Activated CD4-positive, alpha-beta memory T cell treated with anti-CD3 and anti-CD28 coated beads, Interleukin-2, amount 10 ng/mL, durations not matched to agents 7 days and 5 days (primary cell): ENCODE measurements at regions of chr7 and their contacts with region 1.

Region 1: GRCh38 chr7:17298207-17298839 is at the start of gene AHR:
- DNase-seq: peak; percentile 92
- H3K4me3 Mint-ChIP-seq: peak within 1 kb of the TSS; percentile 94
- H3K27ac Mint-ChIP-seq: peak within 1 kb of the TSS; percentile 93
- H3K4me1 Mint-ChIP-seq: peaks cover 25% of the 10 kb centered on the region
- H3K27me3 Mint-ChIP-seq: no peaks in the 10 kb centered on the region
- total RNA-seq, gene AHR: 37.7 to 38.0 TPM

Region 2: DNA sequence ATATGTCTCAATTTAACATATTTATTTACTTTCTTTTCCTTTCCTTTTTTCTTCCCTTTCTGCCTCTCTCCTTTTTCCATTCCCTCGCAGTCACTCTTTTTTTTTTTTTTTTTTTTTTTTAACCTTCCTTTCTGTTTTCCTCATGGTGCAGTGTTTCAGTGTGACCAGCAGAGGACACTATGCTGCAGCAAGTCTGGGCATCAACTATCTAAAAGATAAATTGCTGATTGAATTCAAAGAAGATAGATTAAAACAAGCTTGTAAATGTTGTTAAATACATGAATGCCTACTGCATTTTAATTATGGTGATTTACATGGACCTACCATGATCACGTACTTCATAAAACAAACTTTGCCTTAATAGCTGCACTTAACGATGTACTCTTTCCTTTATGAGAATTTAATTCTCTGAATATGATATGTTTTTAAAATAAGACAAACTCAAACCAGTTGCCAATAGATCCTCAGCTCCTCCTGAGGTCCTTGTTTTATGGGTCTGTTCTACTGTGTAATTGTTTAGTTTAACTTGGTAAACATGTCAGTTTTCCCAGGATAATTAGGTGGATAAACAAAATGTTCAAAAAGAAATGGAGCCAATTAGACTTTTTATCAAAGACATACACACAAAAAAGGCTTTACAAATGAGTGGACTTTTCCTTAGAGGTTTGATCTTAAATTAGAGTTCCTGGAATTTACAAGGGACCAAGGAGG is 315.5 kb before region 1 on chr7:
- CTCF ChIA-PET with region 1: interaction called, 35 read pairs
- POLR2A ChIA-PET with region 1: interaction called, 9 read pairs
- DNase-seq: peak; percentile 42
- H3K4me3 Mint-ChIP-seq: no peak overlapping the region
- H3K27ac Mint-ChIP-seq: no peak overlapping the region
- H3K4me1 Mint-ChIP-seq: peaks cover 7% of the 10 kb centered on the region
- H3K27me3 Mint-ChIP-seq: peaks cover 13% of the 10 kb centered on the region

Region 3: DNA sequence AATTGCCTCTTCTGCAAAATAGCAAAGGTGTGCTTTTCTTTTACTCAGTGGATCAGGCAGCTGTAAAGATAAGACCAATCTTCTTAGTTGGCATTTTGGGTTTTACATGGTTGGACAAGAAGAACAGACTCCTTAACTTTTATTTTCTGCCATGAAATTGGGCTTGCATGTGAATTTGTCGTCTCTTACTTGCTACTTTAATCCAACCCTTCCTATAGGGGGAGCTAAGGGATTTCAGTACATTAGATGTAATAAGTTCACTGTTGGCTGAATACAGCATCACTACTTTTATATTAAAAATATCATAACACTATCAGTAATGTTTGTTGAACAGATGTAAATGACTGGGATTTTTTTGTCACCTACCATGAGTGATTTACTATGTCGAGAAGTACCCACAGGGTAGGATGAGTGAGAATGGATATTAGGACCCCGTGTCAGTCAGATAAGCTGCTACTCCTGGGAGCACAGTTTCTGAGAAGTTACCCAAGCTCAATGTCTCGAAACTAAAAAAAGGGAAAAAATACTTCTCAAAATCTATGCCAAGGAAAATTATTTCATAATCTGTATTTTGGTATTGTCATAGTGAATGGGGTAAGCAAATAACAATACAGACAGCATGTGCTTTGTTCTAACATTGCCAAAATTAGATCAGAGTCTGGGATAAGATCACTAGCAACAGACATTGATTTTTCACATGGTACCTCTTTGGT is 289.2 kb before region 1 on chr7:
- CTCF ChIA-PET with region 1: interaction called, 10 read pairs
- POLR2A ChIA-PET with region 1: interaction called, 8 read pairs
- DNase-seq: no peak
- H3K4me3 Mint-ChIP-seq: no peak overlapping the region
- H3K27ac Mint-ChIP-seq: no peak overlapping the region
- H3K4me1 Mint-ChIP-seq: peaks cover 33% of the 10 kb centered on the region
- H3K27me3 Mint-ChIP-seq: peaks cover 1% of the 10 kb centered on the region

Region 4: GRCh38 chr7:17139081-17139480 is 159.2 kb before region 1 on chr7:
- CTCF ChIA-PET with region 1: interaction called, 6 read pairs
- POLR2A ChIA-PET with region 1: interaction called, 29 read pairs
- DNase-seq: no peak
- H3K4me3 Mint-ChIP-seq: peak overlapping the region; percentile 40
- H3K27ac Mint-ChIP-seq: peak overlapping the region; percentile 93
- H3K4me1 Mint-ChIP-seq: peaks cover 75% of the 10 kb centered on the region
- H3K27me3 Mint-ChIP-seq: no peaks in the 10 kb centered on the region

Region 5: DNA sequence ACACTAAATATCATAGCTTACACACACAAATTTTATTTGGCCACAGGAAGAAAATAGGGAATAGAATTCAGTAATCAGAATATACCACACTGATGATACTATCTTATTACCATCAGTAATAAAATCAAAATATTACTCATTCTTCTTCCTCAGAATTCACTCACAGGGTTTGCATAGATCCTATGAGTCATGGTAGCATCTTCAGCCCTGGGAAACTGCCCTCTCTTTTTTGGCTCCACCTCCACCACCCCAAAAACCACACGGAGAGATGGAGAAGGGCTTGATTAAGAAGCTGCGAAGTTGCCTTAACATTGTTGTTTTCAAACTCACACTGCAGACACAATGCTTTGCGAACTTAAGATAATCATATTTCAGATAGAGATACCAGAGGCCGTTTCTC is 154.0 kb before region 1 on chr7:
- CTCF ChIA-PET with region 1: interaction called, 6 read pairs
- POLR2A ChIA-PET with region 1: interaction called, 29 read pairs
- DNase-seq: peak; percentile 78
- H3K4me3 Mint-ChIP-seq: peak overlapping the region; percentile 18
- H3K27ac Mint-ChIP-seq: peak overlapping the region; percentile 72
- H3K4me1 Mint-ChIP-seq: peaks cover 46% of the 10 kb centered on the region
- H3K27me3 Mint-ChIP-seq: peaks cover 1% of the 10 kb centered on the region

Region 6: DNA sequence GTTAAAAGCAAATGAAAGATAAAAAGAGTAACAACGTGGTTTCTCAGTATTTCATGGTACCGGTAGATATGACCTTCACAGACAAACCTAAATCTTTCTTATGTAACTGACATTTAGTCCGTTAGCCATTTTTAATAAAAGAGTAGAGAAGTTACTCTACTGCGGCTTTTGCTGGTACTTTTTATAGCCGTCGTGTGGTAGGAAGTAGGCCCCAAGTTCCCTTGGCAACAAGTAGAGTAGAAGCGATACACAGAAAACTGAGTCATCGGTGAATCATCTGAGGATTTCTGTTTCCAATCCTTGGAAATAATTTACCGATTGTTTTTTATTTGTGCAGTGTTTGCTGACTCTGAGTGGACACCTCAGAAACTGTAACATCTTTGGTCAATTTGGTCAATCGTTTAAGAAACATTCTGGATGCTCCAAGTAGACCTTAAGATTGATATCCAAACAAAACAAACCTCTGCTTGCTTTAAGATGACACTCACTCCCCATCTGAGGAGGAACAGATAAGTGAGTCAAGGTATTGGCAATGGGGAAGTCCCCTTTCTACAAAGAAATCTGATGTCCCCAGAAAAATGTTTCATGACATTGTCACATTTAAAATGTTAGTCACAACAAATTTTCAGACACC is 63.8 kb before region 1 on chr7:
- CTCF ChIA-PET with region 1: interaction called, 3 read pairs
- POLR2A ChIA-PET with region 1: interaction called, 22 read pairs
- DNase-seq: peak; percentile 76
- H3K4me3 Mint-ChIP-seq: peak overlapping the region; percentile 71
- H3K27ac Mint-ChIP-seq: peak overlapping the region; percentile 91
- H3K4me1 Mint-ChIP-seq: peaks cover 39% of the 10 kb centered on the region
- H3K27me3 Mint-ChIP-seq: no peaks in the 10 kb centered on the region

Region 7: GRCh38 chr7:17402628-17403278 is 104.4 kb after region 1 on chr7:
- CTCF ChIA-PET with region 1: interaction called, 13 read pairs
- POLR2A ChIA-PET with region 1: interaction called, 6 read pairs
- DNase-seq: no peak
- H3K4me3 Mint-ChIP-seq: peak overlapping the region; percentile 50
- H3K27ac Mint-ChIP-seq: peak overlapping the region; percentile 85
- H3K4me1 Mint-ChIP-seq: peaks cover 41% of the 10 kb centered on the region
- H3K27me3 Mint-ChIP-seq: no peaks in the 10 kb centered on the region